ENCODE measurements at regions of chr1 and their contacts with region 1.

Region 1: DNA sequence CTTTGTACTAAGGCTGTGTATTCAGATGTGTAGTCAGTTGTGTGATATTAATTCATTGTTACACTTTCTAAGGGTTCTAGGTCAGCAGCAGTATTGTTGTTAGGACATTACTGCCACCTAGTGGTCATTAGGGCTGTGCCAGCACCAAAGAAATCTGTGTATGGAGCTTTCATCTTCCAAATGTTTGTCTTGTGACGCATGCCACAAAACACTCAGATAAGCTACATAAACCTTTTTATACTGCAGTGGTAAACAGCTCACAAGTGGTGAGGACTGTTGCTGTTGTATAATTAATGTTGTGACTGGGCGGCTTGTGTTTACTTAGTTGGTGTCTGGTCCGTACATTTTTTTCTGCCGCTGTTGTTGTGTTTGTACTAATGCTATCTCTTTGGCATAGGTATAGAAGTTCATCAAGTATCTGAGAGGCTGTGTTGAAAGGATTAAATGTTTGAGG is 51.7 kb downstream of the S1PR1 start:
- DNase-seq: peak; percentile 45 to 90 (median 64)
- ATAC-seq: peak; percentile 62
- H3K4me3 ChIP-seq: no peak overlapping the region
- H3K4me3 Mint-ChIP-seq: peak overlapping the region; percentile 25
- H3K27ac ChIP-seq: no peak overlapping the region
- H3K27ac Mint-ChIP-seq: peak overlapping the region; percentile 83
- H3K4me1 ChIP-seq: peaks cover 78% of the 10 kb centered on the region
- H3K4me1 Mint-ChIP-seq: peaks cover 76% of the 10 kb centered on the region
- H3K27me3 ChIP-seq: no peaks in the 10 kb centered on the region
- H3K27me3 Mint-ChIP-seq: no peaks in the 10 kb centered on the region
- CTCF ChIP-seq: peak; percentile 89

Region 2: GRCh38 chr1:100794748-100795645 is 493.5 kb before region 1 on chr1:
- CTCF ChIA-PET with region 1: no interaction called
- POLR2A ChIA-PET with region 1: no interaction called
- intact Hi-C with region 1: no loop called
- DNase-seq: no peak
- ATAC-seq: no peak
- H3K4me3 ChIP-seq: no peak overlapping the region
- H3K4me3 Mint-ChIP-seq: no peak overlapping the region
- H3K27ac ChIP-seq: no peak overlapping the region
- H3K27ac Mint-ChIP-seq: no peak overlapping the region
- H3K4me1 ChIP-seq: no peaks in the 10 kb centered on the region
- H3K4me1 Mint-ChIP-seq: no peaks in the 10 kb centered on the region
- H3K27me3 ChIP-seq: peaks cover 0 to 5% of the 10 kb centered on the region in 2 experiments
- H3K27me3 Mint-ChIP-seq: peaks cover 39% of the 10 kb centered on the region
- CTCF ChIP-seq: no peak

Region 3: GRCh38 chr1:100921109-100921706 is 367.3 kb before region 1 on chr1:
- CTCF ChIA-PET with region 1: interaction called, 19 read pairs
- POLR2A ChIA-PET with region 1: interaction called, 16 read pairs
- intact Hi-C with region 1: loop called (anchors 1 kb)
- DNase-seq: peak in 4 of 14 experiments; percentile 19 to 80 (median 74)
- ATAC-seq: no peak
- H3K4me3 ChIP-seq: no peak overlapping the region
- H3K4me3 Mint-ChIP-seq: no peak overlapping the region
- H3K27ac ChIP-seq: no peak overlapping the region
- H3K27ac Mint-ChIP-seq: peak overlapping the region; percentile 71
- H3K4me1 ChIP-seq: peaks cover 28% of the 10 kb centered on the region
- H3K4me1 Mint-ChIP-seq: peaks cover 39% of the 10 kb centered on the region
- H3K27me3 ChIP-seq: no peaks in the 10 kb centered on the region
- H3K27me3 Mint-ChIP-seq: no peaks in the 10 kb centered on the region
- CTCF ChIP-seq: peak; percentile 97

Region 4: DNA sequence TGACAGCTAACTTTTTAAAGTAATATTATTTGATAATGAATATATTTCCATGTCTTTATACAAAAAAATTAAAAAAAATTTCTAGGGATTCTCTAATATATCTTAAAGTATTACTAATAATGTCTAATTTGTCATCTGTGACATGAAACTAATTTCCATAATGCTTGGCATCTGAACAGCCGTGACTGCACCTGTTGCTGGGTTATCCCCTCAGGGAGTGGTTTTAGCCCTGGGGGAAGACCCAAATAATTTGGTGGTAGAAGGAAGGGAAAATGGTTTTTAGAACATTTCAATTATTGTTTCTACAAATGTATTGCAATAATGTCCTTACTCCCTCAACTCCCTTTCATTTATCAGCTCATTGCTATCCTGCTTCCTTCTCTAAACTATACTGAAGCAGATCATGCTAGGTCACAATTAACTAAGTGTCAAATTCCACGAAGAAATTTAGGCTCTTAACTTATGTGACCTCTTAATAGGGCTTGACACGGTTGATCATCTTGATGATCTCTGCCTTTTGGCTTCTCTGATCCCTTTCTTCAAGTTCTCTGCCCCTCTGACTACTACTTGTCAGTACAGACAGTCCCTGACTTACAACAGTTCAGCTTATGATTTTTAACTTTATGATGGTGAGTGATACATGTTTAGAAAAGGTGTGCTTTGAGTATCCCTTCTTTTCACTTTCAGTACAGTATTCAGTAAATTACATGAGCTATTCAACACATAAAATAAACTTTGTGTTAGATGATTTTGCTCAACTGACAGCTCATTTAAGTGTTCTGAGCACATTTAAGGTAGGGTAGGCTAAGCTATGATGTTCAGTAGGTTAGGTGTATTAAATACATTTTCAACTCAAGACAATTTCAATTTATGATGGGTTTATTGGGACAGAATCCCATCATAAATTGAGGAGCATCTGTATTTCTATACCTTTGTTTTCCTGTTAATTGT is 236.6 kb before region 1 on chr1:
- CTCF ChIA-PET with region 1: no interaction called
- POLR2A ChIA-PET with region 1: no interaction called
- intact Hi-C with region 1: no loop called
- DNase-seq: no peak
- ATAC-seq: no peak
- H3K4me3 ChIP-seq: no peak overlapping the region
- H3K4me3 Mint-ChIP-seq: no peak overlapping the region
- H3K27ac ChIP-seq: no peak overlapping the region
- H3K27ac Mint-ChIP-seq: no peak overlapping the region
- H3K4me1 ChIP-seq: no peaks in the 10 kb centered on the region
- H3K4me1 Mint-ChIP-seq: peaks cover 22% of the 10 kb centered on the region
- H3K27me3 ChIP-seq: no peaks in the 10 kb centered on the region
- H3K27me3 Mint-ChIP-seq: no peaks in the 10 kb centered on the region
- CTCF ChIP-seq: no peak

Region 5: GRCh38 chr1:101112051-101112780 is 176.3 kb before region 1 on chr1:
- CTCF ChIA-PET with region 1: interaction called, 10 read pairs
- POLR2A ChIA-PET with region 1: interaction called, 3 read pairs
- intact Hi-C with region 1: loop called in 1 of 2 experiments (anchors 1 kb)
- DNase-seq: peak; percentile 59 to 95 (median 72)
- ATAC-seq: peak; percentile 87
- H3K4me3 ChIP-seq: no peak overlapping the region
- H3K4me3 Mint-ChIP-seq: peak overlapping the region; percentile 73
- H3K27ac ChIP-seq: peak overlapping the region; percentile 58 to 81
- H3K27ac Mint-ChIP-seq: peak overlapping the region; percentile 94
- H3K4me1 ChIP-seq: peaks cover 23% of the 10 kb centered on the region
- H3K4me1 Mint-ChIP-seq: peaks cover 61% of the 10 kb centered on the region
- H3K27me3 ChIP-seq: no peaks in the 10 kb centered on the region
- H3K27me3 Mint-ChIP-seq: no peaks in the 10 kb centered on the region
- CTCF ChIP-seq: no peak

Region 6: GRCh38 chr1:101136739-101137138 is 151.8 kb before region 1 on chr1:
- CTCF ChIA-PET with region 1: interaction called, 23 read pairs
- POLR2A ChIA-PET with region 1: interaction called, 4 read pairs
- intact Hi-C with region 1: loop called (anchors 1 kb)
- DNase-seq: peak in 4 of 14 experiments; percentile 53 to 75 (median 64)
- ATAC-seq: peak; percentile 81
- H3K4me3 ChIP-seq: no peak overlapping the region
- H3K4me3 Mint-ChIP-seq: peak overlapping the region; percentile 40
- H3K27ac ChIP-seq: no peak overlapping the region
- H3K27ac Mint-ChIP-seq: peak overlapping the region; percentile 72
- H3K4me1 ChIP-seq: peaks cover 12% of the 10 kb centered on the region
- H3K4me1 Mint-ChIP-seq: peaks cover 65% of the 10 kb centered on the region
- H3K27me3 ChIP-seq: no peaks in the 10 kb centered on the region
- H3K27me3 Mint-ChIP-seq: no peaks in the 10 kb centered on the region
- CTCF ChIP-seq: peak; percentile 52

Region 7: DNA sequence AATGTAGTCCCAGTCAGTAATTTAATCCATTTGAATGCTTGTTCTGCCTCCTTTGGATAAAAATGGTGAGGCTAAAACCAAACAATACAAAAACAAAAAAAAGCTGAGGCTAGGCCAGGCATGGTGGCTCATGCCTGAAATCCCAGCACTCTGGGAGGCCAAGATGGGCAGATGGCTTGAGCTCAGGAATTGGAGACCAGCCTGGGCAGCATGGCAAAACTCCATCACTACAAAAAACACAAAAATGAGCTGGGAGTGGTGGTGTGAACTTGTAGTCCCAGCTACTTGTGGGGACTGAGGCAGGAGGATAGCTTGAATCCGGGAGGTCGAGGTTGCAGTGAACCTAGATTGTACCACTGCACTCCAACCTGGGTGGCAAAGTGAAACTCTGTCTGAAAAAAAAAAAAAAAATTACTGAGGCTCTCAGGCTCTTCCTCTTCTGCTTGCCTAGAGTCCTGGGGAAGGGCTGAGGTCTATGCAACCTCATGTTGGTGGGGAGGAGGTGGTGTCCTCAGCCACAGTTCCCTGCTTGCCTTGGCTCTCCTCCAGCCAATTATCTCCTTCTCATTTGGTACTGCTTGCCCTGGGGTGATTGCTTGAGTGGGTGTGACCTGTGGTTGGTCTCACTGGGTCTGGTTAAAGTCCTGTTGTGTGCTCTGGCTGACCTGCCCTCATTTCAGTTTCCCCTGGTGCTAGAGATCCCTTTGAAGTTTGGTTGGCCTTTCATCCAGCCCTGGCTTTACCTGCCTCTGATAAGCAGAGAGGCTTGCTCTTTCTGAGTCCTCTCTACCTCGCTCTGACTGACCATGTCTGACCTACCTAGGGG is 30.8 kb before region 1 on chr1:
- CTCF ChIA-PET with region 1: interaction called, 21 read pairs
- POLR2A ChIA-PET with region 1: interaction called, 7 read pairs
- intact Hi-C with region 1: no loop called
- DNase-seq: peak in 5 of 14 experiments; percentile 24 to 81 (median 64)
- ATAC-seq: peak; percentile 72
- H3K4me3 ChIP-seq: no peak overlapping the region
- H3K4me3 Mint-ChIP-seq: peak overlapping the region; percentile 56
- H3K27ac ChIP-seq: peak overlapping the region; percentile 47 to 54
- H3K27ac Mint-ChIP-seq: peak overlapping the region; percentile 47
- H3K4me1 ChIP-seq: peaks cover 46% of the 10 kb centered on the region
- H3K4me1 Mint-ChIP-seq: peaks cover 65% of the 10 kb centered on the region
- H3K27me3 ChIP-seq: no peaks in the 10 kb centered on the region
- H3K27me3 Mint-ChIP-seq: no peaks in the 10 kb centered on the region
- CTCF ChIP-seq: no peak

Region 8: DNA sequence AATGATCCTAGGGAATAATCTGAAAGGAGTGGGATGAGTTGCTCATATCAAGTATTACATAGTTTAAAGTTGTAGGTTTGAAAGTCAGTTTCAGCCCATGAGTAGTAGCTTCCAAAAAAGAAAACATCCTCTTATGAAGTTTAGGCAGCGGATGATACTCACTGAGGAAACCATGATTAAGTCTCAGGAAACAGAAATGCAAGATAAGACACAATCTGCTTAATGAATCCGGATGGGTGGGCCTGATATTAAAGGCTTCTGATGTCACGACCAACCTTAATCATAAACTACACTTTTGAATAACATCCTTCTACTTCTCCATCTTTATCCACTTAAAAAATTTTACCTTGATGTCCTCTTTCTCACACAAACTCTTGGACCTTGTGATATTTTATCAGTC is 10.1 kb after region 1 on chr1:
- CTCF ChIA-PET with region 1: interaction called, 10 read pairs
- POLR2A ChIA-PET with region 1: interaction called, 6 read pairs
- intact Hi-C with region 1: no loop called
- DNase-seq: peak in 1 of 14 experiments; percentile 55
- ATAC-seq: peak; percentile 41
- H3K4me3 ChIP-seq: no peak overlapping the region
- H3K4me3 Mint-ChIP-seq: no peak overlapping the region
- H3K27ac ChIP-seq: no peak overlapping the region
- H3K27ac Mint-ChIP-seq: peak overlapping the region; percentile 63
- H3K4me1 ChIP-seq: peaks cover 30% of the 10 kb centered on the region
- H3K4me1 Mint-ChIP-seq: peaks cover 43% of the 10 kb centered on the region
- H3K27me3 ChIP-seq: no peaks in the 10 kb centered on the region
- H3K27me3 Mint-ChIP-seq: no peaks in the 10 kb centered on the region
- CTCF ChIP-seq: no peak

Region 9: DNA sequence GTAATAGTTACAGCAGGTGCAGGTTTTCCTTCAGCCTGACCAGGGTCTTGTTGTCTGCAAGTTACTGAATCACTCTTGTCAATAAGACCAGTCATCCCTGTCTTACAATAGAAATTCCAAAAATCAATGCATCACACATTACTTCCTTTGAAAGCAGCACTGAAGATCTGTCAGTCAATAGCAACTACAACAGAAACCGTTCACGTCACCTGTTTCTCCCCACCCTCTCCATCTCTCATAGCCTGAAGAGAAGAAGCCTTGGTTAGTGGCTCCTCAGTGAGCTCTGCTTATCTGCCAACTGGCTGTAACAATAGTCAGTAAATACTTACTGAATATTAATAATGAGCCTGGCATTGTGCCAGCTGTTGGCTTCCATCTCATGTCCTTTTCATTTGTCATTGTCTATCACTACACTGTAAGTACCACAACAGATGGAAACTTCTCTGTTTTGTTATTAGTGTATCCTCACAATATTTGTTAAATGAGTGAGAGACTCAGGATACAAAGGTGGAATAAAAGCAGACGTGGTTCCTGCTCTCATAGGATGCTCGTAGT is 143.5 kb after region 1 on chr1:
- CTCF ChIA-PET with region 1: no interaction called
- POLR2A ChIA-PET with region 1: no interaction called
- intact Hi-C with region 1: no loop called
- DNase-seq: no peak
- ATAC-seq: no peak
- H3K4me3 ChIP-seq: no peak overlapping the region
- H3K4me3 Mint-ChIP-seq: no peak overlapping the region
- H3K27ac ChIP-seq: no peak overlapping the region
- H3K27ac Mint-ChIP-seq: no peak overlapping the region
- H3K4me1 ChIP-seq: no peaks in the 10 kb centered on the region
- H3K4me1 Mint-ChIP-seq: no peaks in the 10 kb centered on the region
- H3K27me3 ChIP-seq: no peaks in the 10 kb centered on the region
- H3K27me3 Mint-ChIP-seq: no peaks in the 10 kb centered on the region
- CTCF ChIP-seq: no peak

Region 10: DNA sequence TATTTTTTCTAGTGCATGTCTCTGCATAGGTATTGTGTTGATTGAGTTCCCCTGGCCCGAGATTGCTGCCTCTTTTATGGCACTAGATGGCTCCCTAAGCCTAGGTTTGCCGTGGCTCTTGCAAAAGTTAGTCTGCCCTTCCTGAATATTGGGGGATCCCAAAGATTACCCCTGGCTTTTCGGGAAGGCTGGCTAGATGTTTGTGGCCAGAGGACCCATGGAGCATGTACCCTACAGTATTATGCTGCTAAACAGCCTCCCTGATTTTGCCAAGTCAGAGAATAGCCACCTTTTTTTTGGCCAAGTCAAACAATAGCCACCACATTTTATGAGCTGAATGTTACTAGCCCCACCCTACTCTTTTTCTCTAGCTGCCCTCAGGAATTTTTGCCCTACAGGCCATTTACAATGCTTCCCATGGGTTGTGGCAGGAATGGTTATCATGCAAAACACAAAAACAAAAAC is 365.0 kb after region 1 on chr1:
- CTCF ChIA-PET with region 1: no interaction called
- POLR2A ChIA-PET with region 1: no interaction called
- intact Hi-C with region 1: no loop called
- DNase-seq: no peak
- ATAC-seq: no peak
- H3K4me3 ChIP-seq: no peak overlapping the region
- H3K4me3 Mint-ChIP-seq: no peak overlapping the region
- H3K27ac ChIP-seq: no peak overlapping the region
- H3K27ac Mint-ChIP-seq: no peak overlapping the region
- H3K4me1 ChIP-seq: no peaks in the 10 kb centered on the region
- H3K4me1 Mint-ChIP-seq: no peaks in the 10 kb centered on the region
- H3K27me3 ChIP-seq: no peaks in the 10 kb centered on the region
- H3K27me3 Mint-ChIP-seq: peaks cover 11% of the 10 kb centered on the region
- CTCF ChIP-seq: no peak

Measured in CD4-positive, alpha-beta T cell (primary cell).